Aorta (tissue), 5 donors: ENCODE measurements at regions of chr11 and their contacts with region 1.

Region 1: GRCh38 chr11:11787305-11788062 is 54.3 kb upstream of the USP47 start:
- DNase-seq: peak; percentile 79 to 87
- ATAC-seq: peak; percentile 86
- H3K4me3 ChIP-seq: no peak overlapping the region
- H3K27ac ChIP-seq: no peak overlapping the region
- H3K4me1 ChIP-seq: no peaks in the 10 kb centered on the region
- H3K27me3 ChIP-seq: no peaks in the 10 kb centered on the region

Region 2: GRCh38 chr11:10784232-10785145 is 1003.0 kb before region 1 on chr11:
- intact Hi-C with region 1: loop called in 1 of 2 experiments (anchors 5 kb)
- DNase-seq: no peak
- ATAC-seq: no peak
- H3K4me3 ChIP-seq: no peak overlapping the region
- H3K27ac ChIP-seq: no peak overlapping the region
- H3K4me1 ChIP-seq: no peaks in the 10 kb centered on the region
- H3K27me3 ChIP-seq: no peaks in the 10 kb centered on the region

Region 3: GRCh38 chr11:10792398-10792975 is 995.0 kb before region 1 on chr11:
- intact Hi-C with region 1: loop called (anchors 5 to 10 kb)
- DNase-seq: peak; percentile 91 to 97
- ATAC-seq: peak; percentile 95
- H3K4me3 ChIP-seq: no peak overlapping the region
- H3K27ac ChIP-seq: no peak overlapping the region
- H3K4me1 ChIP-seq: no peaks in the 10 kb centered on the region
- H3K27me3 ChIP-seq: no peaks in the 10 kb centered on the region

Region 4: DNA sequence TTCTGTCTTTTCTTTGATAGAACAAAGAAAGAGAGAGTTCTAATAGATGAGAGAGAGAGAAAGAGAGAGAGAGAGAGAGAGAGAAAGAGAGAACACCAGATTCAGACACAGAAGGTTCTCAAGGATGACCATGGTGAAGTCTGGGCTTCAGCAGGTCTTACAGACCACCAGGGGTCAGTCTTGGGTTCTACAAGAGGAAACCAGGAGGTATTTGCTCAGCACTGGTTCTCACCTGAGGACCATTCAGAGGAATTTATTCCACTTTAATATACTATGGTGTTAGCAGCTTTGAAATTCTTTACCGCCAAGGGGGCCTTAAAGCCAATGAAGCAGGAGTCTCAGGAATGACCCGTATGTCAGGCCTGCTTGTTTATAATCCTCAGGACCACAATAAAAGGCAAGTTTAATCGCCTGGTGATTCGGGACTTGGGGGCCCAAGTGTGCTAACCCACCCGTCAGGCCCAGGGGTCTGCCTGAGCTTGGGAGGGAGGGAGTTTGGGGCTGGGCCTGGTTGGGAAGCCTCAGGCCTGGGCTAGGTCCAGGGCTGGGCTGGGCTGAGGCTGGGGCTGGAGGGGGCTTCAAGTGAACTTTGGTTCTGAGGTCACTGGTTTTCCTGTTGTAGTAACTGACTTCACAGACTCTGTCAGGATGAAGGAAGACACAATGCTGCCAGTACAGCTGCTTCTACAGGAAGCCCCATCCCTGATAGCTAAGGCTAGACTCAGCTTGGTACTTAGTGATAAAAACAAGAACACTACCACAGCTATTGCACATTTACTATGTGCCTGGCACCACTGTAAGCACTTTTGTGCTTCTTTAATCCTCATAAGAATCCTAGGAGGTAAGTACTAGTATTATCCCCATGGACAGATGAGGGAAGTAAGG is 750.4 kb before region 1 on chr11:
- intact Hi-C with region 1: loop called (anchors 2 kb)
- DNase-seq: no peak
- ATAC-seq: peak; percentile 74
- H3K4me3 ChIP-seq: no peak overlapping the region
- H3K27ac ChIP-seq: no peak overlapping the region
- H3K4me1 ChIP-seq: no peaks in the 10 kb centered on the region
- H3K27me3 ChIP-seq: no peaks in the 10 kb centered on the region

Region 5: GRCh38 chr11:11621573-11622319 is 165.7 kb before region 1 on chr11 and contains the start of gene GALNT18:
- intact Hi-C with region 1: loop called in 1 of 2 experiments (anchors 10 kb)
- DNase-seq: peak; percentile 94 to 96
- ATAC-seq: peak; percentile 96
- H3K4me3 ChIP-seq: peak within 1 kb of the TSS; percentile 30 to 84
- H3K27ac ChIP-seq: peak within 1 kb of the TSS; percentile 6 to 65
- H3K4me1 ChIP-seq: peaks cover 0 to 5% of the 10 kb centered on the region in 2 donors
- H3K27me3 ChIP-seq: no peaks in the 10 kb centered on the region
- total RNA-seq, gene GALNT18: 37.3 to 60.6 TPM